ENCODE measurements at regions of chr1 and their contacts with region 1.

Region 1: DNA sequence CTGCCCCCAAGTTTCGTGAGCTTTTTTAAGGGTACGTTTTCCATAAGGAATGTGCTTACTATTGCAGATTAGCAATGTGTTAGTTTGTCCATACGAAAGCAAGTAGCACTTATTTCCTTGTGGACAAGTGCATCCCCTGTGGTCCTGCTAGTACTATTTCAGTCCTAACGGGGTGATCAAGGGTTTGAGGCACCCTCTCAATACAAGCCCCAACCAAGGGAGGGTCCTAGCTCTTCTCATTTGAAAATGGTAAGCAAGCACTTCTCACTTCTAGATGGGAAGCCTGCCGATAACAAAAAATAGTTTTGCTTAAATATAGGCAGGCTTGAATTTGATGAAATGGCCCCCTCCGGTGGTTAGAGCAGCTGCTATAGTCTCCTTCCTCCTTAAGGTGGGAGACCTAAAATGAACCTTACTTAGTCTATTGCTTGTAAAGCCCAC is 64.0 kb upstream of the HMCN1 start:
- DNase-seq: peak; percentile 76
- ATAC-seq: peak; percentile 74
- H3K4me3 Mint-ChIP-seq: no peak overlapping the region
- H3K27ac Mint-ChIP-seq: no peak overlapping the region
- H3K4me1 Mint-ChIP-seq: peaks cover 52% of the 10 kb centered on the region
- H3K27me3 Mint-ChIP-seq: no peaks in the 10 kb centered on the region

Region 2: GRCh38 chr1:185170291-185170848 is 499.8 kb before region 1 on chr1:
- CTCF ChIA-PET with region 1: interaction called, 28 read pairs
- POLR2A ChIA-PET with region 1: no interaction called
- DNase-seq: peak; percentile 65
- ATAC-seq: peak; percentile 93
- H3K4me3 Mint-ChIP-seq: peak overlapping the region; percentile 13
- H3K27ac Mint-ChIP-seq: no peak overlapping the region
- H3K4me1 Mint-ChIP-seq: peaks cover 13% of the 10 kb centered on the region
- H3K27me3 Mint-ChIP-seq: no peaks in the 10 kb centered on the region

Region 3: DNA sequence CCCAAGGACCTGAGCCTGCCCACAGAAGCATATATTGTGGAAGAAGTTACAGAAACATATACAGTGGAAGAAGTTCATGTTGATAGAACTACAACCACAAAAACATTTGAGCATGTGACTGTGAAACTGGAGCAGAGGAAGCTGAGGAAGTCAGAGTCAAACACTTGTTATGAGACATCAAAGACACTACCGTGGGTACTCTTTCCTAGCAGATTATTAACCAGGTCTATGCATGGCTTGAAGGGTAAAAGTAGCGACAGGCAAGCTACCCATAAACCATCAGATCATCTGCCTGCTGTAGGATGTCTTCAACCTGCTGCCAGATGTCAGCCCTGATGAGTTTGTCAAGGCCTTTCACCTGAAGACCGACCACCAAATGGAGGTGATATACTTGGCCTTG is 389.0 kb before region 1 on chr1:
- CTCF ChIA-PET with region 1: interaction called, 10 read pairs
- POLR2A ChIA-PET with region 1: no interaction called
- DNase-seq: peak; percentile 29
- ATAC-seq: peak; percentile 75
- H3K4me3 Mint-ChIP-seq: no peak overlapping the region
- H3K27ac Mint-ChIP-seq: peak overlapping the region; percentile 75
- H3K4me1 Mint-ChIP-seq: peaks cover 27% of the 10 kb centered on the region
- H3K27me3 Mint-ChIP-seq: no peaks in the 10 kb centered on the region

Region 4: DNA sequence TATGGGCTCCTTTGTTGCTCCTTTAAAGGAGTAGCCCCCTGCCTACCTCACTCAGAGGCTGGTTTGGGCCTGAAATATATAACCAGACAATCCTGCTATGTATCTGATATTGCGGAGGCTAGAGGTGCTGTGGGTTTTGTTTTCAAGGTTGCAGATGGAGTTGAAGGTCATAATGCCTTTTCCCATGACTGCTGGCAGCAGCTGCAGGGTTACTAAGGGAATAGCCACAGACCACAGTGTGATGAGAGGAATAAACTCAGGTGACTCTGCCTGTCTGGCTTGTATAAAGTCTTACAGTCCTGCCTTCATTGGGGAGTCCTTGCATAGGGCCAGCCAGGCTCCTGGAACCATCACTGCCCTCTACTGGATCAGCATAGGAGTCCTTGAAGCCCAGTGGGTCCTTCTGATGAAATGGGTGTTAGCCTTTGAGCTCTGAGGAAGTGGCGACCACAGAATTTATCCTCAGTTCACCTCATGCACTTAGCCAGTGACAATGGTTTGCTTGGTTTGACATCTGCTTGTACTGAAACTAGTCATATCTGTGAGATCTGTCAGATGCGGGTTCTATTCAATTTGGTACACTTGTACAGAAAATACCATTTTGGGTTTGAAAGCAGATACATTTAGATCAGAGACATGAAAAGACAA is 110.4 kb before region 1 on chr1:
- CTCF ChIA-PET with region 1: interaction called, 54 read pairs
- POLR2A ChIA-PET with region 1: interaction called, 6 read pairs
- DNase-seq: peak; percentile 90
- ATAC-seq: peak; percentile 89
- H3K4me3 Mint-ChIP-seq: peak overlapping the region; percentile 58
- H3K27ac Mint-ChIP-seq: peak overlapping the region; percentile 92
- H3K4me1 Mint-ChIP-seq: peaks cover 55% of the 10 kb centered on the region
- H3K27me3 Mint-ChIP-seq: no peaks in the 10 kb centered on the region

Region 5: GRCh38 chr1:185595835-185596667 is 74.2 kb before region 1 on chr1:
- CTCF ChIA-PET with region 1: interaction called, 19 read pairs
- POLR2A ChIA-PET with region 1: no interaction called
- DNase-seq: peak; percentile 60
- ATAC-seq: peak; percentile 76
- H3K4me3 Mint-ChIP-seq: no peak overlapping the region
- H3K27ac Mint-ChIP-seq: no peak overlapping the region
- H3K4me1 Mint-ChIP-seq: peaks cover 27% of the 10 kb centered on the region
- H3K27me3 Mint-ChIP-seq: no peaks in the 10 kb centered on the region

Region 6: GRCh38 chr1:185646202-185646683 is 24.0 kb before region 1 on chr1:
- CTCF ChIA-PET with region 1: interaction called, 35 read pairs
- POLR2A ChIA-PET with region 1: no interaction called
- DNase-seq: no peak
- ATAC-seq: no peak
- H3K4me3 Mint-ChIP-seq: no peak overlapping the region
- H3K27ac Mint-ChIP-seq: no peak overlapping the region
- H3K4me1 Mint-ChIP-seq: peaks cover 38% of the 10 kb centered on the region
- H3K27me3 Mint-ChIP-seq: no peaks in the 10 kb centered on the region

Region 7: GRCh38 chr1:185681034-185681633 is 10.9 kb after region 1 on chr1:
- CTCF ChIA-PET with region 1: interaction called, 38 read pairs
- POLR2A ChIA-PET with region 1: no interaction called
- DNase-seq: peak; percentile 54
- ATAC-seq: peak; percentile 67
- H3K4me3 Mint-ChIP-seq: no peak overlapping the region
- H3K27ac Mint-ChIP-seq: no peak overlapping the region
- H3K4me1 Mint-ChIP-seq: peaks cover 28% of the 10 kb centered on the region
- H3K27me3 Mint-ChIP-seq: peaks cover 6% of the 10 kb centered on the region